MCF 10A (cell line): ENCODE measurements at regions of chr1 and their contacts with region 1.

Region 1: GRCh38 chr1:169711469-169712281 is at the start of gene SELL:
- DNase-seq: peak; percentile 90
- H3K4me3 Mint-ChIP-seq: peak within 1 kb of the TSS; percentile 58
- H3K27ac Mint-ChIP-seq: no peak within 1 kb of the TSS
- H3K4me1 Mint-ChIP-seq: peaks cover 7% of the 10 kb centered on the region
- H3K27me3 Mint-ChIP-seq: peaks cover 27% of the 10 kb centered on the region
- CTCF ChIP-seq: peak; percentile 85
- total RNA-seq, gene SELL: not detected in 2 replicates

Region 2: DNA sequence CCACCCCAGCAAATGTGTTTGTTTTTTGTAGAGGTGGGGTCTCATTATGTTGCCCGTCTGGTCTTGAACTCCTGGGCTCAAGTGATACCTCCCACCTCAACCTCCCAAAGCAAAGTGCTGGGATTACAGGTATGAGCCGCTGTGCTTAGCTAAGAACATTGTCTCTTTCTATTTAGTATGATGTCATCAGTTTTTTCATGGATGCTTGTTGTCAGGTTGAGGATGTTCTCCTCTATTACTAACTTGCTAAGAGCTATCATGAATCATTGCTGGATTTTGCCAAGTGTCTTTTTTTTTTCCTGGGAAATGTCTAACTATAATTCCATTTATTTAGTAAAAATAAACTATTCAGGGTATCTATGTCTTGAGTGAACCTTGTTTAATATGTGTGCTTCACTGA is 1755.8 kb before region 1 on chr1:
- CTCF ChIA-PET with region 1: no interaction called
- POLR2A ChIA-PET with region 1: no interaction called
- intact Hi-C with region 1: no loop called
- DNase-seq: no peak
- H3K4me3 Mint-ChIP-seq: no peak overlapping the region
- H3K27ac Mint-ChIP-seq: peak overlapping the region; percentile 42
- H3K4me1 Mint-ChIP-seq: peaks cover 22% of the 10 kb centered on the region
- H3K27me3 Mint-ChIP-seq: no peaks in the 10 kb centered on the region
- CTCF ChIP-seq: no peak

Region 3: DNA sequence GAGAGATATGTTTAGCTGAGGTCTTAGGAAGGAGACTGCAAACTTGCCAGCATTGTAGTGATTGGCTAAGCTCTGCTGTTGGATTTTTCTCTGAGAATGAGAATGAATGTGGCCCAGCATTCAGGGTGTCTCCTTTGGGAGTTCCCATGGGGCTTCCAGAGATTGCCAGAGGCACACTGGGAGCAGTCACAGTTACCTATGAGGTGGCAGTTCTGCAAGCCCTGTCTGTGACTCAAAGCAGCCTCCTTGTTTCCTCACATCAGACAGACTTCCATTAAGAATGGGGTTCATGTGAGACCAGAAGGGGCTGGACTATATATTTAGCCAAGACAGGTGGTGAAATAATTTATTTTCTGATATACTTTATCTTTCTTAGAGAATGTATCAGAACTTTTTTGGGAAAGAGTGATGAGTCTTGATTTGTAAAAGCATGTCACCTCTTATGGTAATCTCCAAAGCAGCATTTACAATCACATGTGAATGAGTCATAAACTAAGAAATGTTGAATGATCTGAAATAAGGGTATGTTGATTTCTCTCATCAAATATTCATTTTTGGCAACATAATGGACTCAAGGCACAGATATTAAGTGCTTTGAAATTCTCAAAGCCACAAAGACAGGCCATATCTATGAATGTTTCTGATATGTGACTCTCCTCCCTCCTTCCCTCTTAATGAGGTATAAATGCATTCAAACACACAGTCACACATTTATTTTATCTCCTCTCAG is 216.5 kb before region 1 on chr1:
- CTCF ChIA-PET with region 1: no interaction called
- POLR2A ChIA-PET with region 1: no interaction called
- intact Hi-C with region 1: no loop called
- DNase-seq: peak; percentile 31
- H3K4me3 Mint-ChIP-seq: no peak overlapping the region
- H3K27ac Mint-ChIP-seq: peak overlapping the region; percentile 52
- H3K4me1 Mint-ChIP-seq: peaks cover 18% of the 10 kb centered on the region
- H3K27me3 Mint-ChIP-seq: no peaks in the 10 kb centered on the region
- CTCF ChIP-seq: no peak

Region 4: GRCh38 chr1:169557131-169557530 is 154.5 kb before region 1 on chr1:
- CTCF ChIA-PET with region 1: interaction called, 153 read pairs
- POLR2A ChIA-PET with region 1: no interaction called
- intact Hi-C with region 1: no loop called
- DNase-seq: no peak
- H3K4me3 Mint-ChIP-seq: no peak overlapping the region
- H3K27ac Mint-ChIP-seq: no peak overlapping the region
- H3K4me1 Mint-ChIP-seq: no peaks in the 10 kb centered on the region
- H3K27me3 Mint-ChIP-seq: peaks cover 89% of the 10 kb centered on the region
- CTCF ChIP-seq: no peak

Region 5: GRCh38 chr1:169610108-169610507 is 101.6 kb before region 1 on chr1:
- CTCF ChIA-PET with region 1: interaction called, 10 read pairs
- POLR2A ChIA-PET with region 1: no interaction called
- intact Hi-C with region 1: no loop called
- DNase-seq: no peak
- H3K4me3 Mint-ChIP-seq: no peak overlapping the region
- H3K27ac Mint-ChIP-seq: no peak overlapping the region
- H3K4me1 Mint-ChIP-seq: no peaks in the 10 kb centered on the region
- H3K27me3 Mint-ChIP-seq: peaks cover 54% of the 10 kb centered on the region
- CTCF ChIP-seq: no peak

Region 6: GRCh38 chr1:169701261-169702005 is 10.2 kb before region 1 on chr1:
- CTCF ChIA-PET with region 1: interaction called, 18 read pairs
- POLR2A ChIA-PET with region 1: no interaction called
- intact Hi-C with region 1: no loop called
- DNase-seq: no peak
- H3K4me3 Mint-ChIP-seq: no peak overlapping the region
- H3K27ac Mint-ChIP-seq: no peak overlapping the region
- H3K4me1 Mint-ChIP-seq: no peaks in the 10 kb centered on the region
- H3K27me3 Mint-ChIP-seq: peaks cover 17% of the 10 kb centered on the region
- CTCF ChIP-seq: no peak

Region 7: GRCh38 chr1:169809370-169810095 is 97.9 kb after region 1 on chr1:
- CTCF ChIA-PET with region 1: interaction called, 12 read pairs
- POLR2A ChIA-PET with region 1: interaction called, 3 read pairs
- intact Hi-C with region 1: no loop called
- DNase-seq: peak; percentile 60
- H3K4me3 Mint-ChIP-seq: no peak overlapping the region
- H3K27ac Mint-ChIP-seq: no peak overlapping the region
- H3K4me1 Mint-ChIP-seq: no peaks in the 10 kb centered on the region
- H3K27me3 Mint-ChIP-seq: no peaks in the 10 kb centered on the region
- CTCF ChIP-seq: peak; percentile 59